T-cell (primary cell): ENCODE measurements at regions of chr11 and their contacts with region 1.

Region 1: GRCh38 chr11:78323363-78323762 is 94.3 kb downstream of the GAB2 start:
- DNase-seq: no peak
- ATAC-seq: no peak
- H3K4me3 ChIP-seq: no peak overlapping the region
- H3K4me3 Mint-ChIP-seq: no peak overlapping the region
- H3K27ac ChIP-seq: no peak overlapping the region
- H3K27ac Mint-ChIP-seq: no peak overlapping the region
- H3K4me1 ChIP-seq: peaks cover 4 to 5% of the 10 kb centered on the region in 2 experiments
- H3K4me1 Mint-ChIP-seq: peaks cover 16 to 24% (median 22%) of the 10 kb centered on the region in 3 donors
- H3K27me3 ChIP-seq: no peaks in the 10 kb centered on the region
- H3K27me3 Mint-ChIP-seq: no peaks in the 10 kb centered on the region

Region 2: DNA sequence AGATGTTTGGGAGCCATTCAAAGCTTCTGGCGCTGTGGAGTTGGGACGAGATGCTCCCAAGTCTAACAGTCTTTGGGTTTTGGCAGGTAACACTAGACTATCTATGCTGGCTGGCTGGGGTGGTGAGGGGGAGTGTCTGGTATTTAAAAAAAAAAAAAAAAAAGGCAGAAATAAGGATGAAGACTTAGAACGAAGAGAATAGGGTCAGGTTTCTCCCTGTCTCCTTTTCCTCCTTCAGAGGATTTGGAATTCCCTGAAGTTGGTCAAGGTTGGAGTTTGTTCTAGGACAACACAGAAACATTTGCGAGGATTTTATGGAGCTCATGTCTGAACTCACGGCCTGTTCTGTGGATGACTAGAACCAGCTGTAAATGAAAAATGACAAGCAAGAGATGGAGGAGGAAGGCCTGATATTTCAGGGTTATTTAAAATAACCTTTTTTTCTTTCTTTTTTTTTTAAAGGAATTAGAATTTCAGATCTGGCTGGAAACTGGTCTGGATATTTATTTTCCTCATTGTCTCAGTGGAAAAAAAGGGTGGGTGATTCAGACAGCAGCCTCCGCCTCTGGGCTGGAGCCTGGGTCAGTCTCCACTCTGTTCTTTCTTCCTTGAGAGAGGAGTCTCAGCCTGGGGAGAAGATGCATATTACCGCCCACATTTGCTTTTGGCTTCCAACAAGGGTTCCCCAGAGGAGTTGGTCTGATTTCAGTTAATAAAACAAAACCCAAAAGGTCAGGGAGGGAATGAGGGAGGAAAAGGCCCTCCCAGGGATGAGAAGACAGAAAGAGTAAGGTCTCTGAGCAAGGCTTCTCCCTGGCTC is 54.6 kb before region 1 on chr11:
- CTCF ChIA-PET with region 1: no interaction called
- POLR2A ChIA-PET with region 1: interaction called in 1 of 2 experiments, 13 read pairs
- DNase-seq: no peak
- ATAC-seq: no peak
- H3K4me3 ChIP-seq: no peak overlapping the region
- H3K4me3 Mint-ChIP-seq: no peak overlapping the region
- H3K27ac ChIP-seq: no peak overlapping the region
- H3K27ac Mint-ChIP-seq: no peak overlapping the region
- H3K4me1 ChIP-seq: no peaks in the 10 kb centered on the region
- H3K4me1 Mint-ChIP-seq: peaks cover 0 to 4% (median 3%) of the 10 kb centered on the region in 3 donors
- H3K27me3 ChIP-seq: no peaks in the 10 kb centered on the region
- H3K27me3 Mint-ChIP-seq: peaks cover 0 to 1% of the 10 kb centered on the region in 2 donors

Region 3: DNA sequence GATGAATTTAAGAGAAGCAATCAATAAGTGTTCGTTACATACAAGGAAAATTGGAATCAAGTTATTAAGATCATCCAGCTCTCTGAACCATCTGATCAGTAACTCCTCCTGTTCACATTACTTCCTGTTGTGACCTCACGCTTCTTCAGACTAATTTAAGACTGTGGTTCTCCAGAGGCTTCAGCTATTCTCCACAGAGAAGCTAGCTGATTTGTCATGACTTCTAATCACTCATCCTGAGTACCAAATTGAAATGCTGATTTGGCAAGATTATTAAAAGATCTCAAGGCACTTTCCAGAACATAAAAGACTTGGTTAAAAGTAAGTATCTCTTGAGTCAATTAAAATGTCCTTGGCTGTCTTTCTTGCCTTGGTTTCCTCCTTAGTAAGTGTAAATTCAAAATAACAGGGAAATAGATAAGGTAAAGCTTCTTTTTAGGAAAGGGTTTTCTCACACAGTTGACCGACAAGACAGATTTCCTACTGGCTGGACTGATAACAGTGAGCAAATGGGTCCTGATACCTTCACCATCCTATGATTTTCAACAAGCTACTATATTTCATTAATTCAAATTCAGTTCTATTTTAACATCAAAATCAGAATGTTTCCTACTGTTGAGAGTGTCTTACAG is 55.8 kb after region 1 on chr11:
- CTCF ChIA-PET with region 1: no interaction called
- POLR2A ChIA-PET with region 1: no interaction called
- DNase-seq: no peak
- ATAC-seq: no peak
- H3K4me3 ChIP-seq: no peak overlapping the region
- H3K4me3 Mint-ChIP-seq: no peak overlapping the region
- H3K27ac ChIP-seq: no peak overlapping the region
- H3K27ac Mint-ChIP-seq: no peak overlapping the region
- H3K4me1 ChIP-seq: peaks cover 0 to 5% of the 10 kb centered on the region in 2 experiments
- H3K4me1 Mint-ChIP-seq: peaks cover 0 to 6% (median 6%) of the 10 kb centered on the region in 3 donors
- H3K27me3 ChIP-seq: no peaks in the 10 kb centered on the region
- H3K27me3 Mint-ChIP-seq: no peaks in the 10 kb centered on the region